Activated naive CD4-positive, alpha-beta T cell treated with anti-CD3 and anti-CD28 coated beads for 36 hours (primary cell): ENCODE measurements at regions of chr14 and their contacts with region 1.

Region 1: GRCh38 chr14:55446218-55446654 is 5.8 kb upstream of the TBPL2 start:
- DNase-seq: peak; percentile 76
- H3K4me3 Mint-ChIP-seq: no peak overlapping the region
- H3K27ac Mint-ChIP-seq: no peak overlapping the region
- H3K4me1 Mint-ChIP-seq: peaks cover 13% of the 10 kb centered on the region
- H3K27me3 Mint-ChIP-seq: no peaks in the 10 kb centered on the region

Region 2: DNA sequence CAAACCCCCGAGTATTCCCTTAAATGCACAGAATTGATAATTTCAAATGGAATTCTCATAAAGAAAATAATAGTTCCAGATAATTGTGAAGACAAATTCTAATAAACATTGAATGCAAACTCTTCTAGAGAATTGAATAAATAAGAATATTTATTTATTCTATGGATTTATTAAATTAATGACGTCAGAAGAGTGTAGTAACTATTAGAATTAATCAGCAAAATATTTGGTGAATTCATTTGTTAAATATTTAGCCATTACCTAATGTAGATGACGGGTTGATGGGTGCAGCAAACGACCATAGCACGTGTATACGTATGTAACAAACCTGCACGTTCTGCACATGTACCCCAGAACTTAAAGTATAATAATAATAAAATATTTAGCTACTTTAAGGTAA is 27.6 kb after region 1 on chr14:
- CTCF ChIA-PET with region 1: interaction called, 11 read pairs
- intact Hi-C with region 1: no loop called
- DNase-seq: no peak
- H3K4me3 Mint-ChIP-seq: no peak overlapping the region
- H3K27ac Mint-ChIP-seq: no peak overlapping the region
- H3K4me1 Mint-ChIP-seq: no peaks in the 10 kb centered on the region
- H3K27me3 Mint-ChIP-seq: no peaks in the 10 kb centered on the region

Region 3: GRCh38 chr14:55665067-55665675 is 218.9 kb after region 1 on chr14:
- CTCF ChIA-PET with region 1: interaction called, 11 read pairs
- intact Hi-C with region 1: loop called (anchors 5 kb)
- DNase-seq: peak; percentile 5
- H3K4me3 Mint-ChIP-seq: no peak overlapping the region
- H3K27ac Mint-ChIP-seq: no peak overlapping the region
- H3K4me1 Mint-ChIP-seq: peaks cover 17% of the 10 kb centered on the region
- H3K27me3 Mint-ChIP-seq: no peaks in the 10 kb centered on the region